Mammary epithelial cell (primary cell): ENCODE measurements at regions of chr16 and their contacts with region 1.

Region 1: DNA sequence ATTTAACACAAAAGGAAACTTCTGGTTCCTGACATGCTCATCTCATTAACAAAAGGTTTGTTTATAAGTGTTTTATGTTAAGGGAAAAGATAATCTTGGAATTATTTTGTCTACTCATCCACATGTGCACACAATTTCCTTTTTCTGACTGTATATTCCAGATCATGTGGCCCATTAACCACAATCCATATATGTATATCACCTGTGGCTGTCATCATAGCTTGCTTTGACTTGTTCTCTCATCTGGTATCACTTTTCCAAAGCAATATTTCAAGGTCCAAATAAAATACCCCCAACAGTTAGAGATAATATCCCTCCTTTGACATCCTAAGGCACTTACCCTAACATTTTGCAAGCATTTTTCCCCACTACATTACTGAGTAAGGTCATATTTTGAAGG is 856.1 kb downstream of the CDH11 start:
- DNase-seq: no peak
- H3K4me3 ChIP-seq: no peak overlapping the region
- H3K27ac ChIP-seq: no peak overlapping the region
- H3K4me1 ChIP-seq: no peaks in the 10 kb centered on the region
- H3K27me3 ChIP-seq: no peaks in the 10 kb centered on the region
- CTCF ChIP-seq: no peak

Region 2: DNA sequence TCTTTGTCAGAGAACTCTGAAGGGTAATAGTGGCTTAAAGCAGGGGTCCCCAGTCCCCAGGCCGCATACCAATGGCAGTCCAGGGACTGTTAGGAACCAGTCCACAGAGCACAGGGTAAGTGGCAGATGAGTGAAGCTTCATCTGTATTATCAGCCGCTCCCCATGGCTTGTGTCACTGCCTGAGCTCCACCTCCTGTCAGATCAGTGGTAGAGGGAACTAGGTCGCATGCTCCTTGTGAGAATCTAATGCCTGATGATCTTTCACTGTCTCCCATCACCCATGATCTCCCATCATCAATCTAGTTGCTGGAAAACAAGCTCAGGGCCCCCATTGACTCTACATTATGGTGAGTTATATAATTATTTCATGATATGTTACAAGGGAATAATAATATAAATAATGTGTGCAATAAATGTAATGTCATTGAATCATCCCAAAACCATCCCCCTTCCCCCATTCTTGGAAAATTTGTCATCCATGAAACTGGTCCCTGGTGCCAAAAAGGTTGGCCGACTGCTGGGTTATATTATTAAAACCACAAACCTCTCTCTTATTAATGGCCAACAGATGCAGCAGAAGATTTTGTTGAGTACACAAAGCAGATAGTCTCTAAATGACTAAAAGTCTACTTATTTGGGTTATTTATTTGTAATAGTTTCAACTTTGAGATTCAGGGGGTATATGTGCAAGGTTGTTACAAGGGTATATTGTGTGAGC is 73.5 kb after region 1 on chr16:
- CTCF ChIA-PET with region 1: no interaction called
- dilution Hi-C with region 1: no loop called
- in situ Hi-C with region 1: no loop called
- intact Hi-C with region 1: loop called (anchors 1 kb)
- DNase-seq: no peak
- H3K4me3 ChIP-seq: no peak overlapping the region
- H3K27ac ChIP-seq: no peak overlapping the region
- H3K4me1 ChIP-seq: no peaks in the 10 kb centered on the region
- H3K27me3 ChIP-seq: no peaks in the 10 kb centered on the region
- CTCF ChIP-seq: no peak

Region 3: DNA sequence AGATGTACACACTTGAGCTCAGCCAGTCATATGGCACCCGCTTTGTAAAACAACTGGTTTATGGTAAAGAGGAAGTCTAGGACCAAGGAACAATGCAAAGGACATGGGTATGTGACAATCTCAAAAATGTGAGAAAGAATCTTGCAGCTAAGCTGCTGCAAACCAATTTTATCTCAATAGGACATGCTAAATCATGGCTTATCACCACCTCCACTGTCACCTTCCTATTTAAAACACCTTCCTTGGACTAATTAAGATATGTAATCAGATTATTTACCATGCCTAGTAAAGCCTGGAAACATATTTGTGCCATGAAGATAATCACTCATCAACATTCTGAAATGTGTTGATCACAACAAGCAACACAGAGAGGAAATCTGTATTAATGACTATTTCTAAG is 233.5 kb after region 1 on chr16:
- CTCF ChIA-PET with region 1: no interaction called
- dilution Hi-C with region 1: no loop called
- in situ Hi-C with region 1: no loop called
- intact Hi-C with region 1: no loop called
- DNase-seq: no peak
- H3K4me3 ChIP-seq: no peak overlapping the region
- H3K27ac ChIP-seq: no peak overlapping the region
- H3K4me1 ChIP-seq: no peaks in the 10 kb centered on the region
- H3K27me3 ChIP-seq: no peaks in the 10 kb centered on the region
- CTCF ChIP-seq: no peak